ENCODE measurements at regions of chr19 and their contacts with region 1.

Region 1: GRCh38 chr19:44657211-44657921 is 13.7 kb downstream of the PVR start:
- DNase-seq: peak in 8 of 10 donors; percentile 40 to 92 (median 60)

Region 2: GRCh38 chr19:44570984-44571684 is 86.2 kb before region 1 on chr19:
- intact Hi-C with region 1: loop called (anchors 2 kb)
- DNase-seq: peak in 5 of 10 donors; percentile 16 to 58 (median 44)

Region 3: GRCh38 chr19:44723952-44724319 is 66.6 kb after region 1 on chr19:
- intact Hi-C with region 1: no loop called
- DNase-seq: peak; percentile 55 to 97 (median 78)

Region 4: DNA sequence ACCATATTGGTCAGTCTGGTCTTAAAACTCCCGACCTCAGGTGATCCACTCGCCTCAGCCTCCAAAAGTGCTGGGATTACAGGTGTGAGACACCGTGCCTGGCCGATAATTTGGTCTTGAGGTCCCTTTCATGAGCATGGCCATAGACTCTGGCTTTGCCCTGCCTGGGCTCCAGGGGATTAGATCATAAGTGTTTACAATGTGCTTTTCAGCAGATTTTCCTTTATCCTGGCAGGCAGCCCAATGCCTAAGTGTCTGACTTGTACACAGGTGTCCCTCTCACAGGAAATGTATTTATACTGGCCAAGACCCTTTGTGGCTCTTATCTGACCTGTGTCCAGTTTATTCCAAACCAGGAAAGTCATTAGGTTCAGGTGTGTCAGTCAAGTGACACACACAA is 167.4 kb after region 1 on chr19:
- intact Hi-C with region 1: no loop called
- DNase-seq: no peak